WTC11 (cell line): ENCODE measurements at regions of chr1 and their contacts with region 1.

Region 1: DNA sequence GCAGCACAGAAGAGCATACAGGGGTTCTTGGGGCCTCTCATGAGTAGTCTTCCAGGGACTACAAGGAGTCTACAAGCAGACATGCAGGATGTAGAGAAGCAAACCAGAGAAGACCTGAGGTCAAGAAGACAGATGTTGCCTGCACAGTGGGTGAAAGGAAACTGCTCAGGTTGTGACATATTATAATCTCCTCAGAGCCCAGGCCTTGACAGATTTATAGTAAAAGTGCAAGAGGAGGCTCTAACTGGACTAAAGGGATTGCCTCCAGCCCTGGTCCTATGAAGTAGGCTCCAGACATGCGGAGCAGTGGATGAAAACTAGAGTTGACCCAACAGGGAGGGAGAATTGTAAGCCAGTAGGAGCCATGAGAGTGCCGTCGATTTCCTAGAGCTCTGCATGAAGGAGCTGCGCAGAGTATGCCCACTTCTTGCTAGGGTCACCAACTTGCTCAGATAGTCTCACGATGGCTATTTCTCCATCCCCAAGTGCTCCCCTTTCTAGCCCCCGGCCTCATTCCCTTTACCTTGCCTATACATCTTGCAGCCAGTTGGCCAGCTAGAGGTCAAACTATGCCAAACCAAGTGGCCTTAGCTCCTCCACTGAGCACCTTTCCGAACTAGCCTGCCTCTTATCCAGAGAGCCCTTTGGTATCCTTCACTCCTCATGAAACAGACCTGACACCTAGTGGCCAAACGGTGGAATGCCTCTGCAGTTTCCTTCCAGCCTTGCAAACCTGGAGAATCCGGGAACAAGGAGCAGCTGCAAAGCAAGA is 36.2 kb upstream of the IPO9 start:
- DNase-seq: peak; percentile 85
- ATAC-seq: peak; percentile 96
- H3K4me3 Mint-ChIP-seq: no peak overlapping the region
- H3K27ac Mint-ChIP-seq: no peak overlapping the region
- H3K4me1 Mint-ChIP-seq: no peaks in the 10 kb centered on the region
- H3K27me3 Mint-ChIP-seq: no peaks in the 10 kb centered on the region
- CTCF ChIP-seq: peak; percentile 82

Region 2: DNA sequence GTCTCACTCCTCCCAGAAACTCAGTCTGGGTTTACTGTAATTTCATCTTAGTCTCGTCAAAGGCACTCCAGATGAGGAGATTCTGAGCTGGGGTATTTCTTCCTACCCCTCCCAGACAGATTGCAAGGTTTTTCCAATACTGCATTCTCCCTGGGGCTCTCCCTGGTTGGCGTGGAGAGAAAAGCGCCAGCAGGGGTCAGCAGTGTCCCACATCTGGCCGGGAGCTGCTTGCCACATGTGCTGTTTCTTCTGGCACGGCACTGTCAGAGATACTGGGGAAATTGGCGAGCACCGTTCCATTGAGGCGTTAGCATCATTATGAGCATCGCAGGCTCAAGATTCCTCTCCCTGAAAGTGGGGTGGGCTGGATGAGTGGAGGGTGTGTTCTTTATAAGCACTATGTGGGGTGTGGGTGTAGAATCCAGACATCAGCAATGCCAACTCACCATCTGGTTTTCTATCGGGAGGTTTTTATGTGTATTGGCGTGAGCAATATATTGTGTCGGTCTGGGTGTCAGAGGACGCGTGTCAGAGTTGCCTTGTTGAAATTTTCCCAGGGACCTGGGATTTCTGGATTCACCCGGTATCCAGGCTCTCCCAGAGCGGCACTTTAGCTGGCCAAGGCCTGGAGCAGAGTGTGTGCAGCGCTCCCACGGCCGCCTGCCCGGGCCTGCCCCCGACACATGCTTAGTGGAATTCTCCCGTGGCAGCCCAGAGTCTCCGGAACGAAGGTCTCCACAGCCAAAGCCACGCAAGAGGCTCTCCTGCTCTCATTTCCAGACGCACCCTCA is 261.8 kb before region 1 on chr1:
- CTCF ChIA-PET with region 1: interaction called, 87 read pairs
- POLR2A ChIA-PET with region 1: no interaction called
- DNase-seq: peak; percentile 90
- ATAC-seq: peak; percentile 96
- H3K4me3 Mint-ChIP-seq: no peak overlapping the region
- H3K27ac Mint-ChIP-seq: 0 out of 2 replicates have a peak overlapping the region, but pooled peaks have one; percentile 50
- H3K4me1 Mint-ChIP-seq: peaks cover 23% of the 10 kb centered on the region
- H3K27me3 Mint-ChIP-seq: 0 out of 2 replicates have a peak, but pooled peaks cover under 1% of the 10 kb centered on the region
- CTCF ChIP-seq: peak; percentile 62

Region 3: DNA sequence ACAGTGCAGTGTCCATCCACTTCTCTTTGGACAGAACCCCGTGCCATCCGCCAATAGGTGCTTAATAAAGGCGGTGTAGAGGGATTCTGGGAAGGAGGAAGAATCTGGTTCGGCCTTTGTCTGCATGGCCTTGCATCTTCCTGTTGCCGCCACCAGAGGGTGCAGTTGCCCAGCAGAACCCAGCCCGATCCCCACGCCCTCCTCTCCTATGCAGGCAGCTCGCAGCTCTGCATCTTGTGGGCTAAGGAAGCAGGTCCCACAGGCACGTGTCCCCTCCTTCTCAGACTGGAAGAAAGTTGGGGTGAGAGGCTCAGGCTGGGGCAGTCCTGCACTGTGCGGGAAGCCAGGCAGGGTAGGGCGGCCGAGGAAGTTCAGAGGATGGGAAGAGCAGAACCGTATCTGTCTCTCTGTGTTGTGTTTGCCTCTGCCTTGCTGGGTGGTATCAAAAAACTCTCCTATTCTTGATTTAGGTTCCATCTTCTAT is 233.0 kb before region 1 on chr1:
- CTCF ChIA-PET with region 1: interaction called, 60 read pairs
- POLR2A ChIA-PET with region 1: interaction called, 3 read pairs
- DNase-seq: peak; percentile 86
- ATAC-seq: peak; percentile 96
- H3K4me3 Mint-ChIP-seq: no peak overlapping the region
- H3K27ac Mint-ChIP-seq: no peak overlapping the region
- H3K4me1 Mint-ChIP-seq: peaks cover 17% of the 10 kb centered on the region
- H3K27me3 Mint-ChIP-seq: peaks cover 9% of the 10 kb centered on the region
- CTCF ChIP-seq: peak; percentile 91

Region 4: DNA sequence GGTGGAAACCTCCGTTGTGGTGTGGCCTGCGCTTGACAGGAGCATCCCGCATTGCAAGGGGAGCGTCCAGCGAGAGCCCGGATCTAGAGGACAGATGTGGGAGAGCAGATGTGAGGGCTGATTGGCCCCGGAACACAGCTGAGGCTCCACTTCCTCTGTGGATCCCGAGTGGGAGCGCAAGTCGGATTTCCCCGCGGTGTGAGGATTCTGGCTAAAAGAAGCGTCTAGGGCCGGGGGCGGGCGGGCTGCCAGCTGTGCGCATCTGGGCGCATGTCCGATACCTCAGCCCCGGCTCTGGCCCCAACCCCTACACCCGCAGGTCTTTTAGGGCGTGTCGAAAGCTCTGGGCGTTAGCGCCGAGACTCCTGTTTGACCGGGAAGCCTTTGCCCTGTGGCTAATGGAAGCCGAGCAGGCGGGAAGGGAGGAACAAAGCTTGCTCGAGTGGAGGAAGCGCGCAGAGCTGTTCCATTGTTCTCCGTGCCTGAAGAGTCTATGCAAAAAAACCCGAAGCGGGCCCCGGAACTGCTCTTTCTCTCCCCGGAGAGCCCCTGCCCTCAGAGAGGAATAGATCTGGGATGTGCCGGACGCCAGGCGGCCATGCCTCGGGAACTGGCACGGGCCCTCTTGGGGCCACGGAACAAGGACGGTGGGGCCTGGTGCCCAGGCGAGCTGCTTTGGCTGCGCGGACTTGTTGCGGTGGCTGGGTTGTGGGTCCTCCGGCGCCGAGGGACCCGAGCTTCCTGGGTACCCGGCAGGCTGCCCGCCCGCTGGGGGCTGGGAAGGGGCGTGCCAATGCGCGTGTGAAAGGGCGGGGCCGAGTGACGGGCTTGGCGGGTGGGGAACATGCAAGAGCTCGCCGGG is 142.7 kb before region 1 on chr1:
- CTCF ChIA-PET with region 1: interaction called, 21 read pairs
- POLR2A ChIA-PET with region 1: no interaction called
- DNase-seq: peak; percentile 92
- ATAC-seq: peak; percentile 46
- H3K4me3 Mint-ChIP-seq: peak overlapping the region; percentile 79
- H3K27ac Mint-ChIP-seq: peak overlapping the region; percentile 82; the same call in 1 of the 2 replicates
- H3K4me1 Mint-ChIP-seq: peaks cover 55% of the 10 kb centered on the region
- H3K27me3 Mint-ChIP-seq: peaks cover 17% of the 10 kb centered on the region
- CTCF ChIP-seq: no peak

Region 5: DNA sequence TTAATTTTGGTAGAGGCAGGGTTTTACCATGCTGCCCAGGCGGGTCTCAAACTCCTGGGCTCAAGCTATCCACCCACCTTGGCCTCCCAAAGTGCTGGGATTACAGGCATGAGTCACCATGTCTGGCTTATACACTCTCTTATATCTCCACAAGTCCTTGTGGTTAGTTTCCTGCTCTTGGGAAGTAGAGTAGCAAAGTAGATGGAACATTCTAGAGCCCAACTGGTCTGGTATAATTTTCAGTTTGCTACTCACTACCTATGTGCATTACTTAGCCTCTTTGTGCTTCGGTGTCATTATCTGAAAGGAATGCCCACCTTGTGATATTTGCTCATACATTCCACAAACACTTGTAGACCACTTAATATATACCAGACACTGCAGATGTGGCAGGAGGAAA is 60.4 kb before region 1 on chr1:
- CTCF ChIA-PET with region 1: interaction called, 133 read pairs
- POLR2A ChIA-PET with region 1: no interaction called
- DNase-seq: no peak
- ATAC-seq: no peak
- H3K4me3 Mint-ChIP-seq: no peak overlapping the region
- H3K27ac Mint-ChIP-seq: no peak overlapping the region
- H3K4me1 Mint-ChIP-seq: peaks cover 29% of the 10 kb centered on the region
- H3K27me3 Mint-ChIP-seq: no peaks in the 10 kb centered on the region
- CTCF ChIP-seq: no peak

Region 6: DNA sequence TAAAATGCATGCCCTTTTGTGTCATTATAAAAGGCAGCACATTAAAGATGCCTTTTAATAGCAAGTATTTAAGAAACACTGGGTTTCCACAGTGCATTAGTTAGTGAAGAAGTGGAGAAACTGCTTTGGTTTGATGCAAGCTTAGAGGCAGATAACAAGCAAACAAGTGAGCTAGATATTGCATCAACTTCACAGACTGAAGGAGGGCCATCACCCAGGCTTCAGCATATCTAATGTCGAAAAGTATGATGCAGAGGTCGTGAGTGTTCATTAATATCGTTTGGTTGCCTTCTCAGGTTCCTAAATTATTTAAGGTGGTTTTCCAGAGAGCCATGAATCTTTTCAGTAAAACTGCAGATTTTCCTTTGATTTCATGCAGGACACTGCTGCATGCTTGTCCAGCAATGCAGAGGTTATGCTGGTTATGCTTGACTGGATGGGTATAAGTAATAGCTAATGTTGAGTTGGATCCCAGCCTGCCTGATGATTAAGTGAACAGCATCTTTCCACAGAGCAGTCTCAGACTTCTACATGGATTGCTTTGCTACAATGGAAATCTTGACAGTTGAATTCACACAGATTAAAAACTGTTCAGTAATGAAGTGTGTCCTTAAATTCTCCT is 33.4 kb before region 1 on chr1:
- CTCF ChIA-PET with region 1: interaction called, 33 read pairs
- POLR2A ChIA-PET with region 1: no interaction called
- DNase-seq: no peak
- ATAC-seq: no peak
- H3K4me3 Mint-ChIP-seq: no peak overlapping the region
- H3K27ac Mint-ChIP-seq: no peak overlapping the region
- H3K4me1 Mint-ChIP-seq: peaks cover 42% of the 10 kb centered on the region
- H3K27me3 Mint-ChIP-seq: no peaks in the 10 kb centered on the region
- CTCF ChIP-seq: no peak

Region 7: GRCh38 chr1:201828820-201829774 is 36.4 kb after region 1 on chr1 and contains the start of gene IPO9:
- CTCF ChIA-PET with region 1: interaction called, 10 read pairs
- POLR2A ChIA-PET with region 1: no interaction called
- DNase-seq: peak; percentile 97
- ATAC-seq: peak; percentile 90
- H3K4me3 Mint-ChIP-seq: peak within 1 kb of the TSS; percentile 98
- H3K27ac Mint-ChIP-seq: peak within 1 kb of the TSS; percentile 93
- H3K4me1 Mint-ChIP-seq: peaks cover 50% of the 10 kb centered on the region
- H3K27me3 Mint-ChIP-seq: no peaks in the 10 kb centered on the region
- CTCF ChIP-seq: peak; percentile 92
- total RNA-seq, gene IPO9: 94.1 to 98.6 TPM (median 97.2 TPM) in 3 replicates

Region 8: DNA sequence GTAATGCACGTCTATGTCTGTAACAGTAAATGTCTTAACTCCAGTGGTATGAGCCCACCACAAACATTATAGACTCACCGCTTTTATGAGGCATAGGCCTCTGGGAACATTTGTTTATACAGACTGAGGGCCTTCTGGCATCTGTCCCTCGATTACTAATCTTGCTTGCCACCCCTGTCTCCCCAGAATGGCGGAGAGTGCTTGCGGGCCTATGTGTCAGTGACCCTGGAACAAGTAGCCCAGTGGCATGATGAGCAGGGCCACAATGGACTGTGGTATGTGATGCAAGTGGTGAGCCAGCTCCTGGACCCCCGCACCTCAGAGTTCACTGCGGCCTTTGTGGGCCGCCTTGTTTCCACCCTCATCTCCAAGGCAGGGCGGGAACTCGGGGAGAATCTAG is 77.7 kb after region 1 on chr1:
- CTCF ChIA-PET with region 1: no interaction called
- POLR2A ChIA-PET with region 1: no interaction called
- DNase-seq: no peak
- ATAC-seq: no peak
- H3K4me3 Mint-ChIP-seq: no peak overlapping the region
- H3K27ac Mint-ChIP-seq: no peak overlapping the region
- H3K4me1 Mint-ChIP-seq: no peaks in the 10 kb centered on the region
- H3K27me3 Mint-ChIP-seq: no peaks in the 10 kb centered on the region
- CTCF ChIP-seq: no peak

Region 9: GRCh38 chr1:201904579-201904978 is 111.9 kb after region 1 on chr1:
- CTCF ChIA-PET with region 1: no interaction called
- POLR2A ChIA-PET with region 1: no interaction called
- DNase-seq: no peak
- ATAC-seq: peak; percentile 80
- H3K4me3 Mint-ChIP-seq: no peak overlapping the region
- H3K27ac Mint-ChIP-seq: 0 out of 2 replicates have a peak overlapping the region, but pooled peaks have one; percentile 48
- H3K4me1 Mint-ChIP-seq: no peaks in the 10 kb centered on the region
- H3K27me3 Mint-ChIP-seq: no peaks in the 10 kb centered on the region; the same call in 1 of the 2 replicates
- CTCF ChIP-seq: no peak

Region 10: GRCh38 chr1:201925981-201926645 is 133.4 kb after region 1 on chr1:
- CTCF ChIA-PET with region 1: no interaction called
- POLR2A ChIA-PET with region 1: no interaction called
- DNase-seq: no peak
- ATAC-seq: no peak
- H3K4me3 Mint-ChIP-seq: no peak overlapping the region
- H3K27ac Mint-ChIP-seq: no peak overlapping the region
- H3K4me1 Mint-ChIP-seq: no peaks in the 10 kb centered on the region
- H3K27me3 Mint-ChIP-seq: no peaks in the 10 kb centered on the region
- CTCF ChIP-seq: no peak

Region 11: GRCh38 chr1:202034683-202035462 is 242.2 kb after region 1 on chr1:
- CTCF ChIA-PET with region 1: no interaction called
- POLR2A ChIA-PET with region 1: no interaction called
- DNase-seq: peak; percentile 38
- ATAC-seq: peak; percentile 74
- H3K4me3 Mint-ChIP-seq: no peak overlapping the region
- H3K27ac Mint-ChIP-seq: no peak overlapping the region
- H3K4me1 Mint-ChIP-seq: 0 out of 2 replicates have a peak, but pooled peaks cover 3% of the 10 kb centered on the region
- H3K27me3 Mint-ChIP-seq: no peaks in the 10 kb centered on the region
- CTCF ChIP-seq: no peak